Right ventricle myocardium inferior (tissue), 1 donor: ENCODE measurements at regions of chr12 and their contacts with region 1.

Region 1: DNA sequence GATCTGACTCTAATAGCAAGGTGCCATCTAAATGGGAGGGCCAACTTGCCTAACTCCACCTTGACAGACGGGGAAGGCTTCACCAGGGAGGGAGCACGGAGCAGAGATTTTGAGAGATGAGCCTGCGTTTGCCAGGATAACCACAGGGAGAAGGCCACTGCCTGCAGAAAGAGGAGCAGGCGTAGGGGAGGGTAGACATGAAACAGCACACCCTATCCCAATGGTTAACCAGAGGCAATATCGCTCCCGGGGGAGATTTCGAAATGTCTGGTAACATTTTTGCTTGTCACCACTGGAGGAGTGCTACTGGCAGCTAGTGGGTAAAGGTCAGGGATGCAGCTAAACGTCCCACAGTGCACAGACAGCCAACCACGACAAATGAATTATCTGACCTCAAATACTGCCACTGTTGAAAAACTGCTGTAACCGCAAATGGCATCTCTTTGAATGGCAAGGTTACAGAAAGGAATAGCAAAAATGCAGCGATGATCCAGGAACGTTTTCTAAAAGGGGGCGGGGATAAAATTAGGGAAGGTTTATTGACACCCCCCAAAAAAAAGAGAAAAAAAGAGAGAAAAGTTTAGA is 126.0 kb upstream of the ATF7IP start:
- DNase-seq: no peak
- ATAC-seq: peak; percentile 91

Region 2: GRCh38 chr12:14417715-14418114 is 178.3 kb after region 1 on chr12:
- intact Hi-C with region 1: loop called (anchors 5 kb)
- DNase-seq: peak; percentile 69
- ATAC-seq: peak; percentile 56

Region 3: DNA sequence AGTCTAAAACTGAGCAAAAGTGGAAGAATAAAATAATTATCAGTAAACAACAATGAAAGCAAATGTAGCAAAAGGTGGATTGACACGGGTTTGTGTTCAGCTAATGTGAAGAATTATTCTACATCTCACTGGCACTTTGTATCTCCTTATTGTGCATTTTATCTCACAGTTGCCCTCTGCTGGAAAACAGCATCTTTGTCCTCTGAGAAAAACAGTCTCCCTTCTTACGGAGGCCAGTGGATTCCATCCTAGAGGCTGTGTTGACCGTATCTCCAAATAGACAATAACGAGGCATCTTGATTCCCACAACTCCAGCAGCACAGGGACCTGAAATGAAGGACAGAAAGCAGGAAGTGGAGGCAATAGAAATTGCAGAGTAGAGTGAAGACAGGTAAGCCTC is 379.5 kb after region 1 on chr12:
- intact Hi-C with region 1: loop called (anchors 2 kb)
- DNase-seq: no peak
- ATAC-seq: no peak

Region 4: DNA sequence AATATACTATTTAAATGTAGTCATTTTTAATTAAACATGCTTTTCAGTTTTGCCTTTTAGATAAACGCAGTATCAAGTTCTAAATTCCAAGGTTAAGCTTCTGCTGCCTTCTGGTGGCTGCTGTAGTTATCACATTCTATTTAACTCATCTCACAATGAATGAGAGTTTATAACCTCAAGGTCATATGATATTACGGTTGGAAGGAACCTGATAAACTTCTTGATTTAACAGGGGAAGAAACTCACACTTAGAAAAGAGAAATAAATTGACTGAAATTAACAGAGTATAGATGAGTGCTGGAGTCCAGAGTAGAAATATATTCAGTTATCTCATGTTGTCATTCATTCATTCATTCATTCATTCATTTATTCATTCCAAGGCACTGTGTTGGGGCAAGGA is 425.1 kb after region 1 on chr12:
- intact Hi-C with region 1: loop called (anchors 5 kb)
- DNase-seq: no peak
- ATAC-seq: no peak

Region 5: DNA sequence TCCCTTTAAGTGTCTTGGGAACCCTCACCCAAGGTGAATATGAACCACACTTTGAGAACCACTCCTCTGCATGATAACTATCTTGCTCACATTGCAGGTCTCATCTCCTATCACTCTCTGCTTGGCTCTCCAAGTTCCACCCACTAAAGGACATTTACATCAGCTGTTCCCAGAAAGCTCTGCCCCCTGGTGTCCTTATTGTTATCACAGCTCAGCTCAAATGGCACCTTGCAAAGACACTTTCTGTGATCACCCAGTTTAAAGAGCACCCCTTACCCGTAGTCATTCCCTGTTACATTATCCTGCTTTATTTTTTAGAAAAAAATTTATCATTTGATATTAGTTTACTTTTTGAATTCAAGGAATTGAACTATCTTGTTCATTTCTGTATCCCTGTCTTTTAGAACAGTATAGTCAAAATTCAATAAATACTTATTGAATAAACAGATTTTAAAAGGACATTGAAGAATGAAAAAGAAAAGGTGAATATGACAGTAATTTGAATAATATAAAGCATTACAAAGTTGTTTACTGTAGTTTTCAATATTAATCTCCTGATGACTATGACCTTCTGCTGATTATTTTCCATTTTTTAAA is 477.5 kb after region 1 on chr12:
- intact Hi-C with region 1: loop called (anchors 5 kb)
- DNase-seq: no peak
- ATAC-seq: no peak